Endothelial cell of umbilical vein (primary cell): ENCODE measurements at regions of chr1 and their contacts with region 1.

Region 1: DNA sequence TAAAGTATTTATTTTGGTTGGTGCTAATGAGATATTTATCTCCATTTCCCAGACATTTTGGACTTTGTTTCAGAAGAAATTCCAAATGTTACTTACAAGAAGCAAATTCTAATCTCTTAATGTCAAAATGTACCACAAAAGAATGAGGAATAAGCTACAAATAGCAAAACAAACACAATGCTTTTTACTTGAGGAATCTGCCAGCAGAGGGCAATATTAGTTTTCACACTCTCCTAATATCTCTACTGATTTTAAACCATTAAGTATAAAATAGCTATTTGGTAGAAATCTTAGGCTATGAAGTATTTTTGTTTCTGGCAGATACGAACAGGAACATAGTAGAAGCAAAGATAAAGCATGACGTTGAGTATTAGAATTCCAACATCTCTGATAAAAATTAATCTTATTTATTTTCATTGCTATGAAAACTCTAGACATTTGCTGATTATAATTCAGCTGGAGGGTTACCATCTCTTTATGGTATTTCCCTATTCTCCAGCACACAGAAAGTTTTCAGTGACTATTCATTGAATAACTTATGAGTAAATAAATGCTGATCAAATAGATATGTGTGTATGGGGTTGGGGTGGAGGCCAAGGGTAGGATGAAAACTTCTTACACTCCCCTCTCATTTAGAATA is 13.4 kb upstream of the HMCN1 start:
- DNase-seq: peak; percentile 76
- H3K4me3 ChIP-seq: no peak overlapping the region
- H3K27ac ChIP-seq: no peak overlapping the region
- H3K4me1 ChIP-seq: peaks cover 3% of the 10 kb centered on the region
- H3K27me3 ChIP-seq: no peaks in the 10 kb centered on the region
- CTCF ChIP-seq: peak; percentile 31 to 32
- POLR2A ChIP-seq: no peak

Region 2: GRCh38 chr1:185681034-185681633 is 39.6 kb before region 1 on chr1:
- CTCF ChIA-PET with region 1: interaction called, 13 read pairs
- POLR2A ChIA-PET with region 1: no interaction called
- dilution Hi-C with region 1: no loop called
- intact Hi-C with region 1: no loop called
- DNase-seq: peak; percentile 64
- H3K4me3 ChIP-seq: no peak overlapping the region
- H3K27ac ChIP-seq: no peak overlapping the region
- H3K4me1 ChIP-seq: peaks cover 8% of the 10 kb centered on the region
- H3K27me3 ChIP-seq: no peaks in the 10 kb centered on the region
- CTCF ChIP-seq: peak; percentile 48 to 50
- POLR2A ChIP-seq: no peak

Region 3: GRCh38 chr1:185821612-185822385 is 101.0 kb after region 1 on chr1:
- CTCF ChIA-PET with region 1: interaction called, 12 read pairs
- POLR2A ChIA-PET with region 1: no interaction called
- dilution Hi-C with region 1: no loop called
- intact Hi-C with region 1: no loop called
- DNase-seq: no peak
- H3K4me3 ChIP-seq: no peak overlapping the region
- H3K27ac ChIP-seq: no peak overlapping the region
- H3K4me1 ChIP-seq: peaks cover 17% of the 10 kb centered on the region
- H3K27me3 ChIP-seq: no peaks in the 10 kb centered on the region
- CTCF ChIP-seq: no peak
- POLR2A ChIP-seq: no peak

Region 4: DNA sequence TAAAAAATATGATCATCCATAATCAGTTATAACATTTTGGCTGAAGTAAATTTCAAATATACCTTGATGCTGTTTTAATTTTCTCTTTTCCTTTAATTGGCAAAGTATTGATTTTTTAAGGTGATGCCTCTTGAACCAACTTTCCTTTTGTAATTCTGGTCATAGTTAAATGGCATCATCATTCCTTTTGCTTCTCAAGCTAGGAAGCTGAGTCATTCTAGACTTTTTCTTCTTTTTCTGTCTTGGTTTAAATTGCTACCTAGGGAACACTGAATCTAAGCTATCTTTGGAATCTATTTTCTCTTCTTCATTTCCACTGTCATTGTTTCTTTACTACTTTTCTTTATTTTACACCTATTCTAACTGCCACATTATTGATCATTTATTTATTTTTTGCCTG is 176.1 kb after region 1 on chr1:
- CTCF ChIA-PET with region 1: no interaction called
- POLR2A ChIA-PET with region 1: no interaction called
- dilution Hi-C with region 1: no loop called
- intact Hi-C with region 1: no loop called
- DNase-seq: no peak
- H3K4me3 ChIP-seq: no peak overlapping the region
- H3K27ac ChIP-seq: no peak overlapping the region
- H3K4me1 ChIP-seq: peaks cover 10% of the 10 kb centered on the region
- H3K27me3 ChIP-seq: no peaks in the 10 kb centered on the region
- CTCF ChIP-seq: no peak
- POLR2A ChIP-seq: no peak

Region 5: DNA sequence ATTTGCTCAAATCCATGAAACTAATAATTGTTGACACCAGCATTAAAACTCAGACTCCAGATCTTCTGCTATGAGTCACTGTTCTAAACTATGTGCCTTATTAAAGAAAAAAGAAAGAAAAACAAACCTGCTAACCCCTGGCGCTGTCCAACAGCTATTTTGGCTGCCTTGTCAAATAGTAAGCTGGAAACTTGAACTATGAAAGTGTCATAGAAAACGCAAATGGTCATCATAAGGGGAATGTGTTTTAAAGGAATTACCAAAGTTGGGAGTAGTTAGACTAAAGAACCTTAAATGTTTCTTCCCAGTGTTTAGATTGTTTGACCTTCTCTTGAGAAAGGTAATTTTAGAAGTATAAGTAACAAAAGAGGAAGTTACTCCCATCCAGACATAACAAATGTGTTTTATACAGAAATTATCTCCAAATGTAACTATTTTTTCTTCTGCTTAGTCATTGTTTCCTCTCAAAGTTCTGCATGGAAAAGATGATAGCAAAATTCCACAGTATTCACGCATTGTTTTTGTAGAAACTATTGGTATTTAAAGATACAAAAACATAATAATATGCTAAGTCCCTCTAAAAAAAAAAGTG is 381.9 kb after region 1 on chr1:
- CTCF ChIA-PET with region 1: interaction called, 5 read pairs
- POLR2A ChIA-PET with region 1: no interaction called
- dilution Hi-C with region 1: no loop called
- intact Hi-C with region 1: loop called (anchors 1 kb)
- DNase-seq: peak; percentile 96
- H3K4me3 ChIP-seq: peak overlapping the region in 2 of 3 experiments; percentile 22 to 50
- H3K27ac ChIP-seq: peak overlapping the region; percentile 84
- H3K4me1 ChIP-seq: peaks cover 19% of the 10 kb centered on the region
- H3K27me3 ChIP-seq: no peaks in the 10 kb centered on the region
- CTCF ChIP-seq: no peak
- POLR2A ChIP-seq: no peak

Region 6: GRCh38 chr1:186194107-186194756 is 473.5 kb after region 1 on chr1:
- CTCF ChIA-PET with region 1: interaction called, 15 read pairs
- POLR2A ChIA-PET with region 1: no interaction called
- dilution Hi-C with region 1: no loop called
- intact Hi-C with region 1: no loop called
- DNase-seq: no peak
- H3K4me3 ChIP-seq: no peak overlapping the region
- H3K27ac ChIP-seq: no peak overlapping the region
- H3K4me1 ChIP-seq: peaks cover 2% of the 10 kb centered on the region
- H3K27me3 ChIP-seq: no peaks in the 10 kb centered on the region
- CTCF ChIP-seq: no peak
- POLR2A ChIP-seq: no peak